Endothelial cell of umbilical vein (primary cell): ENCODE measurements at regions of chr12 and their contacts with region 1.

Region 1: DNA sequence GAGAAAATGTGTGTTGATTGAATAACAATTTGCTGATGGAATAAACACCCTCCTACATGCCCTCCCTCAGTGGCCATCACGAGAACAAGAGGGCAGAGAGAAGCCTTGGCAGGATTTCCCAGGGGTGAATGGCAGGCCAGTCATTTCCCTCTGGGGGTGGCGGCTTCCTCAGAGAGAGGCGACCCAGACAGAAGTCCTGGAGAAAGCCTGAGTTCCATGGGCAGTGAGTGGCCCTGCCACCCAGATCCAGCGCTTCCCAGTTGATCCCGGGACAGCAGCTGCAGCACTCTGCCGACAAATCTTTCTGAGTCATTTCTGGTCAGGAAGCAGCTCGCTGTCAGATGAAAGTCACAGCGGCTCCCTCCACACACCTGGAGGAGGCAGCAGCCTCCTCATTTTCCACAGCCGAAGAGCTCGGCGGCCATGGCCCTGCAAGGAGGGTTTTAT is 123.0 kb downstream of the SCARB1 start:
- DNase-seq: peak; percentile 87
- H3K4me3 ChIP-seq: no peak overlapping the region
- H3K27ac ChIP-seq: peak overlapping the region; percentile 88
- H3K4me1 ChIP-seq: peaks cover 42% of the 10 kb centered on the region
- H3K27me3 ChIP-seq: no peaks in the 10 kb centered on the region
- CTCF ChIP-seq: peak; percentile 7 to 13
- POLR2A ChIP-seq: no peak

Region 2: DNA sequence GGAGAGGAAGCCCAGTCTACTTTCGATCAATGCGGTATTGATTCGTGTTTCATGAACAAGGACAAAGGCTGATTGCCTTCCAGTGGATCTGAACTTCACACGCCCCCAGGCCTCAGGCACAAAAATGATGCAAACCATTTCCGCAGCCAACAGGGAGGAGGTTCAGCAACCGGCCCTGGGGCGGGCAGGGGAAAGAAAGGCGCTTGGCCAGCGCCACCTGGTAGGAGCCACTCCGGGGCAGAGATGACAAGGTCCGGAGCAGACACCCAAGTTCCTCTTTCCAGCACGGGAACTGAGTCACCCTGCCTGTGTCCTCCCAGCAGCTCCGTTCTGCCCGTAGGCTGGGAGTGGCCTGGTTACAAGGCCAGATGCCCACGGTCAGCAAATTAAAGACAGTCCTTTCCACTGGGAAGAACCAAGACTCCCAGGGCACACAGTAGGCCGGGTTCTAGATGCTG is 13.4 kb before region 1 on chr12:
- CTCF ChIA-PET with region 1: interaction called, 5 read pairs
- POLR2A ChIA-PET with region 1: no interaction called
- dilution Hi-C with region 1: no loop called
- intact Hi-C with region 1: loop called (anchors 1 kb)
- DNase-seq: peak; percentile 86
- H3K4me3 ChIP-seq: no peak overlapping the region
- H3K27ac ChIP-seq: peak overlapping the region; percentile 80
- H3K4me1 ChIP-seq: peaks cover 16% of the 10 kb centered on the region
- H3K27me3 ChIP-seq: no peaks in the 10 kb centered on the region
- CTCF ChIP-seq: no peak
- POLR2A ChIP-seq: no peak